ENCODE measurements at regions of chr15 and their contacts with region 1.

Region 1: DNA sequence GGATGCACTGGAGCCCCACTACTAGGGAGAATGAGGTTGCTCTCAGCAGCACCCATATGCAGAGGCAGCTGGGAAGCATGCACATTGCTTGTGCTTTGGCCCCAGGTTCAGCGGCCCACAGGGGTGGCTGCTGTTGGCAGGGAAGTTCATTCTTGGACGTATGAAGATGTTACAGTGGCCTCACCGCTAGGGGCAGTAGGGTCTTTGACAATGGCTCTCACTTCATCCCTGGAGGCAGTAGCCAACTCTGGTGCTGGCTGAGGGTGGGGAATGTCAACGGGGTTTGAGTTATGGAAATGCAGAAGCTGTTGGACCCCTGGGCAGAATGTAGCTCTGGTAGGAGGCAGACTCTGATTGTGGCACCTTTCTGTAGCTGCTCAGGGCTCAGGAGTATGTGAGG is 279.9 kb downstream of the SCAPER start:
- DNase-seq: no peak
- H3K4me3 ChIP-seq: no peak overlapping the region
- H3K27ac ChIP-seq: no peak overlapping the region
- H3K4me1 ChIP-seq: no peaks in the 10 kb centered on the region
- H3K27me3 ChIP-seq: no peaks in the 10 kb centered on the region
- CTCF ChIP-seq: no peak

Region 2: DNA sequence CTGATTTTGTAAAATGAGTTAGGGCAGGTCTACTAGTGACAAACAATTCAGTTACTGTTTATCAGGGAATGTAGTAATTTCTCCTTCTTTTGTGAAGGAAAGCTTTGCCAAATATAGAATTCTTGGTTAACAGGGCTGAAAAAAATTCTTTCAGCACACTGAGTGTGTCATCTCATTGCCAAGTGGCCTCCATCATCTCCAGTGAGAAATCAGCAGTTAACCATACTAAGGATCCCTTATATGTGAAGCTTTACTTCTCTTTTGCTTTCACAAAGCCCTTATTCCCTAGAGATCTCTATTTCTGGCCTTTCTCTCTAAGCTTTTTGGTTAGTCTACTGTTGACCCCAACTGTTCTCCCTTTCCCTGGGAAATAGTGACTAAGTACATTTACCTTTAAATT is 10.8 kb after region 1 on chr15:
- CTCF ChIA-PET with region 1: no interaction called
- POLR2A ChIA-PET with region 1: interaction called, 10 read pairs
- intact Hi-C with region 1: no loop called
- DNase-seq: no peak
- H3K4me3 ChIP-seq: no peak overlapping the region
- H3K27ac ChIP-seq: no peak overlapping the region
- H3K4me1 ChIP-seq: no peaks in the 10 kb centered on the region
- H3K27me3 ChIP-seq: no peaks in the 10 kb centered on the region
- CTCF ChIP-seq: no peak

Region 3: DNA sequence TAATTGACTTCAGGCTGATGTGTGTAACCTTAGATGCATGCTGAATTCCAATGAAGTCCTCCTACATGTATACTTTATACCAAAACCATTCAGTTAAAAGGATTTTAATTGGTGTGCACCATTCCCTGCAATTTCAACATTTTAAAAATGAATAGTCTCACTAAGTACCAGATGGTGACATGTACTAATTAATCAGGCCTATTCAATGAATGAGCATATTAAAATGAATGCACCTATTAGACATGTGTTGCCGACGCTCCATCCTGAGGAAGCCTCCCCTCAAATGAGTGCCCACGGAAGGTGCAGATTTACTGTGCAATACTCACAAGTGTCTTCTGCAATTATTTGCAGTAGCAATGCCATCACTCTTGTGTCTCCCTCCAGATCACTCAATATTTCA is 570.3 kb after region 1 on chr15:
- CTCF ChIA-PET with region 1: no interaction called
- POLR2A ChIA-PET with region 1: no interaction called
- intact Hi-C with region 1: no loop called
- DNase-seq: no peak
- H3K4me3 ChIP-seq: no peak overlapping the region
- H3K27ac ChIP-seq: no peak overlapping the region
- H3K4me1 ChIP-seq: no peaks in the 10 kb centered on the region
- H3K27me3 ChIP-seq: no peaks in the 10 kb centered on the region
- CTCF ChIP-seq: no peak

Measured in A673 (cell line).